MCF 10A (cell line): ENCODE measurements at regions of chr5 and their contacts with region 1.

Region 1: GRCh38 chr5:6745706-6746222 is 32.5 kb downstream of the TENT4A start:
- DNase-seq: peak; percentile 62
- H3K4me3 Mint-ChIP-seq: no peak overlapping the region
- H3K27ac Mint-ChIP-seq: no peak overlapping the region
- H3K4me1 Mint-ChIP-seq: no peaks in the 10 kb centered on the region
- H3K27me3 Mint-ChIP-seq: no peaks in the 10 kb centered on the region
- CTCF ChIP-seq: peak; percentile 55

Region 2: GRCh38 chr5:6291961-6292360 is 453.8 kb before region 1 on chr5:
- CTCF ChIA-PET with region 1: no interaction called
- POLR2A ChIA-PET with region 1: no interaction called
- intact Hi-C with region 1: loop called (anchors 5 kb)
- DNase-seq: peak; percentile 26
- H3K4me3 Mint-ChIP-seq: no peak overlapping the region
- H3K27ac Mint-ChIP-seq: no peak overlapping the region
- H3K4me1 Mint-ChIP-seq: no peaks in the 10 kb centered on the region
- H3K27me3 Mint-ChIP-seq: peaks cover 57% of the 10 kb centered on the region
- CTCF ChIP-seq: peak; percentile 19

Region 3: DNA sequence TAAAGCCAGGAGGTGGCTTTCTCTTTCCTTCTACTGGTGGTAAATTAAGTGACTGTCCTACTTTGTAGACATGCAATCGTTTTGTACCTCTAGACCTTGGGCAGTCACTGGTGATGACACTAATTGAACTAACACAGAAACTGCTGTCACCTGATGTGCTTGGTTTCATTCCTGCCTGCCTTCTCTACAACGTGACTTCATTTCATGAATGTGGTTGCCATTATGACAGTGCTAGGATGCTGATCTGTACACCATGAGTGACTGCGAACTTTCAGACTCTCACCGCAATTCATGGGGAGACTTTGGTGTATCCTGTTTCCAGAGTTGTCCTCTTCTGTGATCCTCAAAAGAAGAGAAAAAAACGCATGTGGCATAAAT is 249.6 kb before region 1 on chr5:
- CTCF ChIA-PET with region 1: no interaction called
- POLR2A ChIA-PET with region 1: no interaction called
- intact Hi-C with region 1: loop called (anchors 10 kb)
- DNase-seq: no peak
- H3K4me3 Mint-ChIP-seq: no peak overlapping the region
- H3K27ac Mint-ChIP-seq: no peak overlapping the region
- H3K4me1 Mint-ChIP-seq: no peaks in the 10 kb centered on the region
- H3K27me3 Mint-ChIP-seq: peaks cover 53% of the 10 kb centered on the region
- CTCF ChIP-seq: no peak

Region 4: GRCh38 chr5:6722015-6722414 is 23.7 kb before region 1 on chr5:
- CTCF ChIA-PET with region 1: interaction called, 16 read pairs
- POLR2A ChIA-PET with region 1: no interaction called
- intact Hi-C with region 1: no loop called
- DNase-seq: no peak
- H3K4me3 Mint-ChIP-seq: no peak overlapping the region
- H3K27ac Mint-ChIP-seq: no peak overlapping the region
- H3K4me1 Mint-ChIP-seq: peaks cover 49% of the 10 kb centered on the region
- H3K27me3 Mint-ChIP-seq: no peaks in the 10 kb centered on the region
- CTCF ChIP-seq: no peak